ENCODE measurements at regions of chr4 and their contacts with region 1.

Region 1: DNA sequence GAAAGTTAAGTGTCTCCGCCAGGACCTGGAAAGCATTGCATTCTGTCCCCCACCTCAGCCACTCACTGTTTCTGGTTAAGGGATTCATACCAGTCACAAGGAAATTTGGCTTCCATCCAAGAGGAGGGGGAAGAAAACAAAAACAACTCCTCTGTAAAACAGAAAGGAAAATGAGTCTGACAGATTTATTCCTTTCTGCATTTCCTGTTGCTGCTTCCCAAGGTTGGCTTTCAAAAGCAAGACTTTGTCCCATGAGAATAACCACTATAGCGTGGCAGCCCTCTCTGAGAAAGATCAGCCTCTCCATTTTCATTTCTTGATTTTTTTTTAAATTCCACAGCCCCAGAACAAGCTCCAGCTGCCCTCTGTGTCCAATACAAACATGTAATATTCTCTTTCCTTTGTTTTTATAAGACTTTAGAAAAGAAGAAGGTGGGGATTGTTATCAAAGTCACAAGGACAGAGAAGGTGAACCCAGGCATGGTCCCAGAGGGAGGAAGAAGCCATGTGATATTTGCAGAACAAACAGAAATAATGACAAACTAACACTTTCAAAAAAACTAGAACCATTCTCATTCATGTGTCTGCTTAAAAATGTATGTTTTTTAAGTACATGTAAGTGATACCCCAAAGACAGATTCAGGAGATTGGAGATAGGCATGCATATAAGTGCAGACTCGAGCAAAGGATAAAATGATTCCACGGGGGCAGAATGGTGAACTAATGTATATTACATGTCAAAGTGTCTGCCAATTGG is 90.7 kb upstream of the DCLK2 start:
- DNase-seq: no peak

Region 2: GRCh38 chr4:150960818-150961217 is 973.3 kb after region 1 on chr4:
- CTCF ChIA-PET with region 1: interaction called, 11 read pairs
- POLR2A ChIA-PET with region 1: no interaction called
- DNase-seq: peak; percentile 32

Measured in HEK293T (cell line).